ENCODE measurements at regions of chr5 and their contacts with region 1.

Region 1: GRCh38 chr5:177478711-177479646 is 5.5 kb upstream of the DBN1 start:
- DNase-seq: peak; percentile 67
- ATAC-seq: peak; percentile 75
- H3K4me3 Mint-ChIP-seq: no peak overlapping the region
- H3K27ac Mint-ChIP-seq: peak overlapping the region; percentile 90
- H3K4me1 Mint-ChIP-seq: peaks cover 45% of the 10 kb centered on the region
- H3K27me3 Mint-ChIP-seq: no peaks in the 10 kb centered on the region

Region 2: GRCh38 chr5:177489119-177489716 is 10.2 kb after region 1 on chr5:
- CTCF ChIA-PET with region 1: interaction called, 136 read pairs
- DNase-seq: no peak
- ATAC-seq: no peak
- H3K4me3 Mint-ChIP-seq: no peak overlapping the region
- H3K27ac Mint-ChIP-seq: no peak overlapping the region
- H3K4me1 Mint-ChIP-seq: peaks cover 12% of the 10 kb centered on the region
- H3K27me3 Mint-ChIP-seq: no peaks in the 10 kb centered on the region